ENCODE measurements at regions of chr22 and their contacts with region 1.

Region 1: DNA sequence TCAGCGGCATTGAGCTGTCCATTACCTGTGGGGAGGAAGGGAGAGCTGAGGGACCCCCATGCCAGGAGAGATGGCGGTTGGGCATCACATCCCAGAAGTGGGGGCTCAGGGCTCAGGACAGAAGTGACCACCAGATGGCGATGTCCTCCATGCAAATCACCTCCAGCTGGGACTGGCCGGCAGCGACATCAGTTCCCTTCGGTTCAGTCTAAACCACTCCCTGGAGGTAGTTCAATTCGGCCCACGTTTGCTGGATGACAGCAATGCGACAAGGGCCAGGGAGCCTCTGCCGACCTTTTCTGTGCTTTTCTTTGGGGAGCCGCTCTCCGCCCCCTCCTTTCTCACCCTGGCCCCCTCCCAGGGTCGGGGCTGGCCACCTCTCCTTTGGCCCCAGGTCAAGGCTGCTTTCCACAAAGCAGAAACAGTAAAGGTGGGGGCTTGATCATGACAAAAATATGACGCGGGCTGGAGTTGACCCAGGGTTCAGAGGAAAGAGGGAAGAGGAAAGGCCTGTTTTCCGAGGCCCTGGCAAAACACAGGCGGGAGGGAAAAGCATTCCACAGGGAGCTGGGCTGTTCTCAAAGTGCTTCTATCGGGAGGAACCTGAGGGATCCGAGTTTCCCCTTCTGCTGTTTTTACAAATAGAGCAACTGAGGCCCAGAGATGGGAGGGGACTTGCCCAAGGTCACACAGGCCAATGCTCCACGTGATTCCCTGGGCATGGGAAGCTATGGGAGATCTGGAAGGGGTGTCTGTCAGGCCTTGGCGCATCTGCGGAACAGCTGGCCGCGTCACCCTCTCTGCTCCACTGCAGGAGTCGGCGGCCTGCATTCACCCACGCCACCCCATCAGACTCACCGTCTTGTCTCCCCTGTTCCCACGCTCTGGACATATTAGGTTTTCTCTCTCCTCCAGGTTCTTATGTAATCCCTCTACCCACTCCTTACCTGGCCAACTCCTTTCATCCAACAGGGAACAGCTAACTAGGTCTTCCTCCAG is 54.7 kb downstream of the FBXO7 start:
- DNase-seq: peak; percentile 73 to 80
- H3K4me3 ChIP-seq: no peak overlapping the region
- H3K27ac ChIP-seq: no peak overlapping the region
- H3K4me1 ChIP-seq: peaks cover 13% of the 10 kb centered on the region
- H3K27me3 ChIP-seq: no peaks in the 10 kb centered on the region
- CTCF ChIP-seq: peak; percentile 98

Region 2: GRCh38 chr22:32644252-32645100 is 115.2 kb after region 1 on chr22:
- CTCF ChIA-PET with region 1: no interaction called
- POLR2A ChIA-PET with region 1: no interaction called
- intact Hi-C with region 1: loop called (anchors 5 kb)
- DNase-seq: peak; percentile 55 to 93
- H3K4me3 ChIP-seq: peak overlapping the region; percentile 1; the same call in 1 of the 2 replicates
- H3K27ac ChIP-seq: peak overlapping the region; percentile 85
- H3K4me1 ChIP-seq: peaks cover 26% of the 10 kb centered on the region
- H3K27me3 ChIP-seq: no peaks in the 10 kb centered on the region
- CTCF ChIP-seq: 0 out of 2 replicates have a peak, but pooled peaks have one; percentile 19

Region 3: GRCh38 chr22:32745251-32745995 is 216.1 kb after region 1 on chr22:
- CTCF ChIA-PET with region 1: no interaction called
- POLR2A ChIA-PET with region 1: interaction called, 4 read pairs
- intact Hi-C with region 1: loop called (anchors 1 kb)
- DNase-seq: peak; percentile 82 to 95
- H3K4me3 ChIP-seq: peak overlapping the region; percentile 38; the same call in 1 of the 2 replicates
- H3K27ac ChIP-seq: peak overlapping the region; percentile 95
- H3K4me1 ChIP-seq: peaks cover 40% of the 10 kb centered on the region
- H3K27me3 ChIP-seq: no peaks in the 10 kb centered on the region
- CTCF ChIP-seq: no peak

Region 4: GRCh38 chr22:32796865-32797573 is 267.7 kb after region 1 on chr22:
- CTCF ChIA-PET with region 1: interaction called, 9 read pairs
- POLR2A ChIA-PET with region 1: no interaction called
- intact Hi-C with region 1: loop called (anchors 2 kb)
- DNase-seq: peak in 1 of 2 experiments; percentile 61
- H3K4me3 ChIP-seq: no peak overlapping the region
- H3K27ac ChIP-seq: no peak overlapping the region
- H3K4me1 ChIP-seq: peaks cover 17% of the 10 kb centered on the region
- H3K27me3 ChIP-seq: no peaks in the 10 kb centered on the region
- CTCF ChIP-seq: peak; percentile 97

Region 5: GRCh38 chr22:33000342-33001280 is 471.3 kb after region 1 on chr22:
- CTCF ChIA-PET with region 1: no interaction called
- POLR2A ChIA-PET with region 1: no interaction called
- intact Hi-C with region 1: loop called (anchors 1 kb)
- DNase-seq: peak in 1 of 2 experiments; percentile 60
- H3K4me3 ChIP-seq: no peak overlapping the region
- H3K27ac ChIP-seq: no peak overlapping the region
- H3K4me1 ChIP-seq: peaks cover 27% of the 10 kb centered on the region
- H3K27me3 ChIP-seq: no peaks in the 10 kb centered on the region
- CTCF ChIP-seq: peak; percentile 97

Region 6: DNA sequence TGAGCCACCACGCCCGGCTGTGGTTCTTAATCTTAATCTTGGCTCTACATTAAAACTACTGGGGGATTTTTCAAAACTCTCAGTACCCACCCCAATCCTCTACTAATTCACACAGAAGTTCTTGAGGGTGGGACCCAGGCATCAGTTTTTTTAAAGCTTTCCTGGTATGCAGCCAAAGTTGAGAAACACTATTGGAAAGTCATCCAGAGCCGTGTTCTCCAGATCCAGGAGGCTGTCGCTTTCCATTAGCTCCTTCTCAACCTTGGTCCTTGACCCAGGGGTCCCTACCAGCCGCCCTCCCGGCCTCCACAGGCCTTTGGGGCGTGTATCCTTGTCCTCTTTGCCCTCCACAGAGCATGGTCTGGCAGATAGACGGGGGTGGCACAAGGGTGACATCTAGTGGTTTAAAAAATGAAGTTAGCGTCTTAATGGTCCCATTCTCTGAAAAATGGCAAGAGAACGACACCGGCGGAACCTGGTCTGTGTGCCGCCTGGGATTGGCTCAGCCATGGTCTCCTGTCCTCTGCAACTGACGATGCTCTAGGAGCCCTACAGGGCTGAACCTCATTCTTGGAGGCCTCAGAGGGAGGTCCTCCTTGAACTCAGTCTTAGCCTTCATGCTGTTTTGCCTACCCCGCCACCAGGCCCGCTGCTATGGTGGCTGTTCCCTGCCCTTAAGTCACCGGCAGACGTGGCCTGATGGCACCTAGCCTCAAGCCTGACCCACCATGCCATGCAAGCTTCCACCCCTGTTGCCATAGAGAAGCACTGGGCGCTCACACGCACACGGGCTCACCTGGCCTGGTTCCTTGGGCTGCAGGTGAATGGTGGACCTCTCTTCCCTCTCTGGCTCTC is 680.9 kb after region 1 on chr22:
- CTCF ChIA-PET with region 1: no interaction called
- POLR2A ChIA-PET with region 1: no interaction called
- intact Hi-C with region 1: loop called (anchors 5 kb)
- DNase-seq: peak in 1 of 2 experiments; percentile 10
- H3K4me3 ChIP-seq: no peak overlapping the region
- H3K27ac ChIP-seq: no peak overlapping the region
- H3K4me1 ChIP-seq: no peaks in the 10 kb centered on the region
- H3K27me3 ChIP-seq: peaks cover 78% of the 10 kb centered on the region
- CTCF ChIP-seq: peak; percentile 77